A549 (cell line): ENCODE measurements at regions of chr6 and their contacts with region 1.

Region 1: DNA sequence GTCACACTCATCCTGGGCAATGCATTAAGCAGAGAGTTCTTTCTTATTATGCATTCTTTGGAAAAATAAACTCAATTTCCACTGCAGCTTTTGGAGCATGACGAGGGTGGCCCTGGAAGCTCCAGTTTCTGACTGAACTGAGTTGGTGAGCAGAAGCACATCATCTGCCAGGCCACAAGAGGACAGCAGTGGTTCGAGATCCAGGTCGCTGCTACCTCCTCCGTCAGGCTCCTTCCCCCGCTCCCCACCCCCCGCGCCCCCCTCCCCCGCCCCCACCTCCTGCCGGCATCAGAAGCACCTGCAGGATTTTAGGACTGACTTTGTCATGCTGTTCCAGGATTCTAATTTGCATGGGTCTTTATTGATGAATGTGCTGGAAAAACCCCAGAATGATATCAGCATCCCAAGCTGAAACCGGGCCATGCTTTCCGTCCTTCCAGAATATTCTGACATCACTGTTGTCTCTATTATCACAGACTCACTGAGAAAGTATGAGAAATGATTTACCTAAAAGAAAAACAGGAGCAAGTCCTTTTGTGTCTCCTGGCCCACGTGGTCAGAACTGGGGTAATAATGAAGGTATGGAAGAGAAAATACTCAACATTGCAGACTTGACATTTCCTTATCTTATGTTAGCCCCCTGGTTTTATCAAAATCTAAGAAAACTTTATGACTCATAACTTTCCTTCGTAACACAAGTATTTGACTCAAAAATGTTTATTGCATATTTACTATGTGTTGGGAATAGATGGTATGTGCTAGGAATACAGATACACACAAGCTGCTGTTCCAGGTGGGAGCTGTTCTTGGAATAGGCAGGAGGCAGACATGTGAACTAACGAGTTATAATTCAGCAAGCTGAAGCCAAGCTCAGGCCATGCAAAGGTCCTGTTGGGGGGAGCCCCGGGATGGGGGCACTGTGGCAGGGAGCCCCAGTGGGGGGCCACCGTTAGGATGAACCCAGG is 220.2 kb upstream of the EXOC2 start:
- DNase-seq: peak in 1 of 2 experiments; percentile 55
- ATAC-seq: peak; percentile 86 to 90
- H3K4me3 ChIP-seq: no peak overlapping the region
- H3K27ac ChIP-seq: peak overlapping the region; percentile 34 to 79; a peak in 5 of 6 replicates
- H3K4me1 ChIP-seq: peaks cover 11% of the 10 kb centered on the region
- CTCF ChIP-seq: peak; percentile 58
- EP300 ChIP-seq: no peak
- POLR2A ChIP-seq: no peak
- RAD21 ChIP-seq: peak; percentile 69 to 92

Region 2: GRCh38 chr6:797479-798077 is 115.6 kb before region 1 on chr6:
- CTCF ChIA-PET with region 1: interaction called, 24 read pairs
- POLR2A ChIA-PET with region 1: no interaction called
- DNase-seq: peak; percentile 7 to 51
- ATAC-seq: peak; percentile 68 to 71; a peak in 4 of 6 replicates
- H3K4me3 ChIP-seq: no peak overlapping the region
- H3K27ac ChIP-seq: peak overlapping the region; percentile 46 to 67; a peak in 5 of 6 replicates
- H3K4me1 ChIP-seq: no peaks in the 10 kb centered on the region
- CTCF ChIP-seq: peak; percentile 77
- EP300 ChIP-seq: no peak
- POLR2A ChIP-seq: no peak
- RAD21 ChIP-seq: peak; percentile 82 to 90

Region 3: DNA sequence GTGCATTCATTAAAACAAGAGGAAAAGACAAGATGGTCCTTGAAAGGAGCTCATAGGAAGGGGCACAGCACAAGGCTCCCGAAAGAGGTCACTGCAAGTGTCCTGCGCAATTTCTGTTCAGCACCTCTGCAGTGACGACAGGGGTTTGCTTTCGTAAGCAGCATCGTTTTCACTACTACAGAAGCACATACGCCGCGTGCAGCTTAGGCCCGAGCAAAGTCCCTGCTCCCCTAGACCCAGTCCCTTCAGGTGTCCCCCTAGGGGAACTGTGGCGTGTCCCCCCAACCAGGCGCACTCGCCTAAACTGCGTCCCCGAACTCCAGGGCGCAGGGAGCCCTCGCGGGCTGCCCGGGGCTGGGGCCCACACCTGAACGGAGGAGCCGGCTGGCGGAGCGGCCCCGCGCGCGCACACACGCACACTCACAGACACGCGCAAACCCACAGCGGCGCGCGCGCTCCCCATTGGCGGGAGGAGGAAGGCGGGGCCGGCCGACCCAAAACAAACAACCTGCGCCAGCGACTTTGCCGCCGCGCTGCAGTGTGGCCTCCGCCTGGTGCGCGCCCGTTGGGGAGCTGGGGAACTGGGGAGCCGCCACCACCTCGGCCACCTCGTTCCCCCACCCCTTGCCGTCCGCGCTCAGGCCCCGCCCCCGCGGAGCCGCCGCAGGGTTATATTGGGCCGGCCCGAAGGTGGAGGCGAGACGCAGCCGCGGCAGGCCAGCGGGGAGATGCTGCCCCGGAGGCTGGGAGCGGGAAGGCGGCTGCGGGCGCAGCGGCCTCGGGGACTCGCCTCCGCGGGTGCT is 398.4 kb after region 1 on chr6 and contains the start of gene FOXQ1:
- CTCF ChIA-PET with region 1: interaction called, 26 read pairs
- POLR2A ChIA-PET with region 1: interaction called, 4 read pairs
- DNase-seq: peak in 1 of 2 experiments; percentile 66
- ATAC-seq: peak; percentile 68 to 81
- H3K4me3 ChIP-seq: peak within 1 kb of the TSS; percentile 64
- H3K27ac ChIP-seq: peak within 1 kb of the TSS; percentile 79 to 91
- H3K4me1 ChIP-seq: peaks cover 12% of the 10 kb centered on the region
- CTCF ChIP-seq: no peak
- EP300 ChIP-seq: no peak
- POLR2A ChIP-seq: peak; percentile 66
- RAD21 ChIP-seq: peak in 1 of 2 experiments; percentile 27; a peak in 2 of 5 replicates
- polyA plus RNA-seq, gene FOXQ1: 2.1 and 3.5 TPM in 2 replicates

Region 4: DNA sequence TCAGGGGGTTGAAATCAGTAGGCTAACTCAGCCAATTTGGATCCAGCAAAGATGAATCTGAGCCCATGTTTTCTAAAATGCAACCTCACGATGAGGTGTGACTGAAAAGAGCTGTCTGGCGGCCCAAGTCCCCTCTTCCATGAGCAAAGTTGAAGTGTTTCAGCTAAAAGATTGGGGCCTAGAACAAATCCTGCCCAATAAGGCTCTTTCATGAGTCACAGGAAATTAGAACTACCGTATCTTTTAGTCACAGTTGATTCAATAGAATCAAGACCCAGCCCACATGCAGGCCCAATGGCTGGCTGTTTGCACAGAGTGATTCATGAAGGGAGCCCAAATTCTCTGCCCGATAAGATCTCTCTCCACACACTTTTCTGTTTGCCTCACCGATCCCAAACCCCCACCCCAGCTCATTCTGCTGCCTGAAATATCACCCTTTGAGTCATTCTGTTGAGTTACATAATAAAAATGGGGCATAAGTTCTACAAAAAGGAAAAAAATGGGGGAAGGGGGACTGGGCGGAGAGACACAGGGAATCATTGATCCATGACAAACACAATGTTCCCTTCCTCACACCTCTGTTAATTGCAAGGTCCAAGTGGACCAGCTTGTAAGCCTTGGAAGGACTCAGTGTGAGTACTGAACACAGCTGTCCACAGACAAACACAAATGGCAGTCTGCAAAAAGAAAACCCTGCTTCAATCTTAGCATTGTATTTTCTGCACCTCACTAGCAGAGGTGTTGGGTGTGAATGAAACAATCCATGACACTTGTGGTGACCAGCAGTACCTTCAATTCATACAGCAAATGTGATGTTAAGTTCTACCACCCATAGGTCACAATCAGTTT is 412.5 kb after region 1 on chr6:
- CTCF ChIA-PET with region 1: interaction called, 11 read pairs
- POLR2A ChIA-PET with region 1: no interaction called
- DNase-seq: peak; percentile 77 to 93
- ATAC-seq: peak; percentile 96
- H3K4me3 ChIP-seq: no peak overlapping the region
- H3K27ac ChIP-seq: peak overlapping the region; percentile 80 to 84
- H3K4me1 ChIP-seq: peaks cover 61% of the 10 kb centered on the region
- CTCF ChIP-seq: no peak
- EP300 ChIP-seq: peak; percentile 77 to 90; a peak in 3 of 5 replicates
- POLR2A ChIP-seq: no peak
- RAD21 ChIP-seq: peak; percentile 19 to 30; a peak in 4 of 5 replicates

Region 5: DNA sequence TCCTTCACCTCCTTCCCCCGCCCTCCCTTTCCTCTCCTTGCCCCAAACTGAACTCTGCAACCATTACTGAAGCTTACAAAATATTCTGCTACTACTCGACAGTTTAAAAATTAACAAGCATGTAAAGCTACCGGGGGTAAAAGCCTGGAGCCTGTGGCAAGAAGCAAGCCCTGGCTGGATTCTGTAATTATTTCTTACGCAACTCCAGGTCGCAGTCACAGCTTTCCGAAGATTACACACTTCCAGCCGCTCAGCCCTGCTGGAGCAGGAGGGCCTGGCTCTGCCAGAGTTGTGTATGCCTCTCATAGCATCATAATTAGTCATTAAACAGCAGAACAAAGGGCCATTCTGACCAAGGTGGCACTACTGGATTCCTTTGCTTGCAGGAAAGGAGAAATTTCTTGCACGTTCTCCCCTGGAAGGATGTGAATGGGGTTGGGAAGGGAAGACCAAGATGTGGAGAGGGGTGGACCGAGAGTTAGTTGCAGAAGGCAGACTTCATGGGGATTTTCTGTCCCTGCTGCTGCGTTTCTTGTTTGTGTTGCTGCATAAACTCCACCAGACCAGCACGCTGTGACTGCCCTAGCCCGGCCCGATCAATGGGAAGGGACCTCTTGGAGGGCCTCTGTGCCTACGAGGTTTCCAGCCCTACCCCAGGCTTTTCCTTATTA is 422.3 kb after region 1 on chr6:
- CTCF ChIA-PET with region 1: interaction called, 32 read pairs
- POLR2A ChIA-PET with region 1: no interaction called
- DNase-seq: peak in 1 of 2 experiments; percentile 77
- ATAC-seq: peak; percentile 89 to 95
- H3K4me3 ChIP-seq: no peak overlapping the region
- H3K27ac ChIP-seq: peak overlapping the region; percentile 73 to 85
- H3K4me1 ChIP-seq: peaks cover 31% of the 10 kb centered on the region
- CTCF ChIP-seq: no peak
- EP300 ChIP-seq: peak; percentile 74 to 76; a peak in 3 of 5 replicates
- POLR2A ChIP-seq: no peak
- RAD21 ChIP-seq: peak; percentile 5 to 55; a peak in 3 of 5 replicates

Region 6: GRCh38 chr6:1381481-1382330 is 468.6 kb after region 1 on chr6:
- CTCF ChIA-PET with region 1: interaction called, 19 read pairs
- POLR2A ChIA-PET with region 1: no interaction called
- DNase-seq: no peak
- ATAC-seq: peak; percentile 83 to 95
- H3K4me3 ChIP-seq: peak overlapping the region; percentile 54
- H3K27ac ChIP-seq: peak overlapping the region; percentile 58 to 81; a peak in 5 of 6 replicates
- H3K4me1 ChIP-seq: no peaks in the 10 kb centered on the region
- CTCF ChIP-seq: peak; percentile 75
- EP300 ChIP-seq: no peak
- POLR2A ChIP-seq: no peak
- RAD21 ChIP-seq: peak; percentile 66 to 91

Region 7: DNA sequence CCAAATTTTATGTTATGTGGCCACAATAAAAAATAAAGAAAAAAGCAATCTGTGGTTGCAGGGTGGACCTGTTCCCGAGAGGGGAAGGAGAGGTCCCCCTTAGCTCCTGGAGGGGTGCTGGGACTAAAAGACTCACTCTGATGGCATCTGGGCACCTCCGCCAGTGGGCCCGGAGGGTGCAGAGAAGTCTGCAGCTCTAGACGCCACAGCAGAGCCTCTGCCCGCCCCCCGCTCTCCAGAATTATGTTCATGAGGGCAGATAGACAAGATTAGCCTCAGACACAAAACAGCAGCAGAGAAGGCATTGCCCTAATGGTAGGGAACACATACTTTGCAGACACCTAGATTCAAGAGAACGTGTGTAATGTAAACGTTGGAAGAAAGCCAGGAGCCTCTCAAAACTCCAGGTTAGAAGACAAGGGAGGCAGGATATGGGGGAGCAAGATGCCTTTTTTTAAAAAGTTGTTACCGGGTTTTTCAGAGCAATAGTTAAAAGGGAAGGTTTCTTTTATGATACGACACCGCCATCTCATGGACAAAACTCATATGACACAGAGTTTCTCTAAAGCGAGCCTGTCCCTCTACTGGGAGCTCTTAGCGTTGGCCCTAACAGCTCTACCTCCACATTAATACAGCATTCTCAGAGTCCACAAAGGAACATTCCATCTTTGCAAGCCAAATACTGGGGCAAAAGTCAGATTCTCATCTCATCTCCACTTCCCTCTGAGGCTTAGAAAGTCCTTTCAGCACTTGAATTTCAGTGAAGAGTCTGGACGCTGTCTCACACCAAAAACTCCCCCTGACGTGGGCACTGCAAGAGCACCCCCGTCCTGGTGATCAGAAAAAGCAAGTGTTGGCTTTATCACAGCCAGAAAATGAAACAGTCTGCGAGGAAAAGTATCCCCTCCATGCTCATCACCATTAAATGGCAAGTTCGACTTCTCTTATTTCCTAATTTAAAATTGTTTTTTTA is 523.5 kb after region 1 on chr6:
- CTCF ChIA-PET with region 1: interaction called, 10 read pairs
- POLR2A ChIA-PET with region 1: no interaction called
- DNase-seq: peak; percentile 61 to 62
- ATAC-seq: peak; percentile 96 to 98
- H3K4me3 ChIP-seq: no peak overlapping the region
- H3K27ac ChIP-seq: peak overlapping the region in 1 of 2 experiments; percentile 51; a peak in 3 of 6 replicates
- H3K4me1 ChIP-seq: peaks cover 5% of the 10 kb centered on the region; the same call in 2 of the 3 replicates
- CTCF ChIP-seq: peak; percentile 67
- EP300 ChIP-seq: no peak
- POLR2A ChIP-seq: no peak
- RAD21 ChIP-seq: peak; percentile 77 to 82

Region 8: DNA sequence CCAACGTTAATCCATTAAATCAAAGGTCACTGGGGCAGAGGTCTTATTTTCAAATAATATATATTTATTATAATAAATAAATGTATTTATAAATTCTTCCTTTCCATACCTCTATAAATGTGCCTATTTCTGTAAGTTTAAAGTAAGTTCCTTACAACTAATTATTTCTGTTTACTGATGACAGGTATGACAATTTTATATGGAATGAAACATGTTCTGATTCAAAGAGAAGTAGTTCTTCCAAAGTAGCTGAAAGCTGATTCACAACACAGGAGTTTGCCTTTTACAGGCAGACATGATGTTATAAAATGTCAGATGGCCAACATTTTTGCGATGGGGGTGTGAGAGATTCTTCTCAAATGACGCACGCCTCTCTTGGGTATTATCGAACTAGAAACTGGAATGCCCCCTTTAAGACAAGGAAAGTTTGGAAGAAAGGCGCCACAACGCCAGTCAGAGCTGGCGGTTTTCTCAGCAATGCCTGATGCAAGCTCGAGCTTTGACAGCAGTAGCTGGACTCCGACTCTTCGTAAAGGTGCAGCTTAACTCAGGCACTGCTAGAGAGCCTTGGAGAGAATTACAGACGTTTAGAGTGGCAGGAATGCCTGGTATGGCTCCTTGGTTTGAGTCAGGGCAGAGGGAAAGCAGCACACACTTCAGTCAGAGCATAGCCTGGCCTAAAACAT is 788.7 kb after region 1 on chr6:
- CTCF ChIA-PET with region 1: no interaction called
- POLR2A ChIA-PET with region 1: no interaction called
- DNase-seq: no peak
- ATAC-seq: no peak
- H3K4me3 ChIP-seq: no peak overlapping the region
- H3K27ac ChIP-seq: no peak overlapping the region
- H3K4me1 ChIP-seq: no peaks in the 10 kb centered on the region
- CTCF ChIP-seq: no peak
- EP300 ChIP-seq: no peak
- POLR2A ChIP-seq: no peak
- RAD21 ChIP-seq: no peak